HepG2 (cell line): ENCODE measurements at regions of chr19 and their contacts with region 1.

Region 1: DNA sequence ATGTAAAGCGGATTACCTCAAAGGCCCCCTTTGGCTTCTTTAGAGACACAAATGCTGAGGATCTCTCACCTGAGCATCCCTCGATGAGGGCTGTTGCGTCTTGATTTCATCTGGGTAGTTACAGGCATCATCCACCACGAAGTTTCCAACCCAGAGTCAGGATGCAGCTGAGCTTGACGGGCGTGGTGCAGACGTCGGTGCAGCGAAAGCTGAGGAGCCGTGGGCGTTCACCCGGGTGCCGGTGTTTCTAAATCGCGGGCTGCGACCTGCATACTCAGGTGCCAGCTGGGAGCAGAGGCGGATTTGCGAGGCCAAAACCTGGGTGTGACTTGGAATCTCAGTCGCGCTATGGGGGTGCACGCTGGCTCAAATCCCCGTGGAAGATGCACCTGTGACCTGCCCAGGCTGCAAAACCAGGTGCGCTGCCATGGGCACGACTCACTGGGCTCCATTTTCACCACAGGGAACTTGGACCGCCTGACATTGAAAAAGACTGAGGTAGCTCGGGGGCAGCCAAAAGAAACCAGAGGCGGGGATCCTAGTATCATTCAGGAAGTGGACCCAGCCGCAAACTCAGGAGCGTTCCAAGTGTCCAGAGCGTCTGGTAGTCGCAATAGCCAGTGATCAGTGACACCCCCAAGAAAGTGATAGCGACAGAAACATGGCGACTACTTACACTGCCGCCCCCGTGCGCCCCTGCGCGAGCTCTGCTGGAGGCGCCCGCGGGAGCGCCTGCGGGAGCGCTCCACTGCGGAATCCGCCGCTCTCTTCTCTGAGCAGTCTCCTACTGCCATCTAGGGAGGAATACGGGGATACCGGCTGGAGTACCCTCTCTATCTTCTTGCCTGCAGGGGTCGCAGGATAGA is 36.4 kb upstream of the IGFL4 start:
- DNase-seq: peak; percentile 87
- ATAC-seq: peak; percentile 98
- H3K4me3 ChIP-seq: peak overlapping the region; percentile 63 to 80 (median 65)
- H3K27ac ChIP-seq: no peak overlapping the region
- H3K4me1 ChIP-seq: peaks cover 33% of the 10 kb centered on the region
- H3K27me3 ChIP-seq: no peaks in the 10 kb centered on the region; a peak in 1 of 5 replicates
- CTCF ChIP-seq: peak; percentile 96
- EP300 ChIP-seq: no peak
- POLR2A ChIP-seq: no peak
- RAD21 ChIP-seq: peak; percentile 96

Region 2: GRCh38 chr19:45902651-45903625 is 174.2 kb before region 1 on chr19:
- CTCF ChIA-PET with region 1: no interaction called
- POLR2A ChIA-PET with region 1: interaction called, 3 read pairs
- in situ Hi-C with region 1: loop called (anchors 10 kb)
- intact Hi-C with region 1: no loop called
- DNase-seq: peak; percentile 94
- ATAC-seq: peak; percentile 85
- H3K4me3 ChIP-seq: peak overlapping the region; percentile 50 to 83 (median 66)
- H3K27ac ChIP-seq: peak overlapping the region; percentile 42
- H3K4me1 ChIP-seq: peaks cover 40% of the 10 kb centered on the region
- H3K27me3 ChIP-seq: peaks cover 0 to 3% of the 10 kb centered on the region in 2 experiments; a peak in 2 of 5 replicates
- CTCF ChIP-seq: peak; percentile 17; the same call in 1 of the 2 replicates
- EP300 ChIP-seq: no peak
- POLR2A ChIP-seq: peak; percentile 21 to 70; a peak in 2 of 4 replicates
- RAD21 ChIP-seq: peak; percentile 43; the same call in 1 of the 2 replicates

Region 3: GRCh38 chr19:46030812-46031550 is 46.2 kb before region 1 on chr19:
- CTCF ChIA-PET with region 1: interaction called, 166 read pairs
- POLR2A ChIA-PET with region 1: no interaction called
- in situ Hi-C with region 1: loop called (anchors 5 kb)
- intact Hi-C with region 1: loop called (anchors 1 kb)
- DNase-seq: no peak
- ATAC-seq: no peak
- H3K4me3 ChIP-seq: no peak overlapping the region
- H3K27ac ChIP-seq: no peak overlapping the region
- H3K4me1 ChIP-seq: peaks cover 22% of the 10 kb centered on the region
- H3K27me3 ChIP-seq: no peaks in the 10 kb centered on the region
- CTCF ChIP-seq: no peak
- EP300 ChIP-seq: no peak
- POLR2A ChIP-seq: no peak
- RAD21 ChIP-seq: no peak

Region 4: GRCh38 chr19:46192992-46193650 is 115.9 kb after region 1 on chr19:
- CTCF ChIA-PET with region 1: interaction called, 9 read pairs
- POLR2A ChIA-PET with region 1: no interaction called
- in situ Hi-C with region 1: loop called (anchors 5 kb)
- intact Hi-C with region 1: loop called (anchors 1 kb)
- DNase-seq: peak; percentile 87
- ATAC-seq: peak; percentile 94
- H3K4me3 ChIP-seq: no peak overlapping the region
- H3K27ac ChIP-seq: no peak overlapping the region
- H3K4me1 ChIP-seq: peaks cover 44% of the 10 kb centered on the region
- H3K27me3 ChIP-seq: peaks cover 0 to 6% of the 10 kb centered on the region in 2 experiments; a peak in 2 of 5 replicates
- CTCF ChIP-seq: no peak
- EP300 ChIP-seq: peak; percentile 68 to 85; a peak in 2 of 4 replicates
- POLR2A ChIP-seq: no peak
- RAD21 ChIP-seq: no peak